ENCODE measurements at regions of chr1 and their contacts with region 1.

Region 1: GRCh38 chr1:234610348-234611152 is 572 bp upstream of the IRF2BP2 start:
- DNase-seq: peak; percentile 72 to 93
- H3K4me3 ChIP-seq: peak overlapping the region; percentile 91
- H3K27ac ChIP-seq: peak overlapping the region; percentile 100
- H3K4me1 ChIP-seq: peaks cover 38% of the 10 kb centered on the region
- H3K27me3 ChIP-seq: no peaks in the 10 kb centered on the region
- CTCF ChIP-seq: no peak

Region 2: DNA sequence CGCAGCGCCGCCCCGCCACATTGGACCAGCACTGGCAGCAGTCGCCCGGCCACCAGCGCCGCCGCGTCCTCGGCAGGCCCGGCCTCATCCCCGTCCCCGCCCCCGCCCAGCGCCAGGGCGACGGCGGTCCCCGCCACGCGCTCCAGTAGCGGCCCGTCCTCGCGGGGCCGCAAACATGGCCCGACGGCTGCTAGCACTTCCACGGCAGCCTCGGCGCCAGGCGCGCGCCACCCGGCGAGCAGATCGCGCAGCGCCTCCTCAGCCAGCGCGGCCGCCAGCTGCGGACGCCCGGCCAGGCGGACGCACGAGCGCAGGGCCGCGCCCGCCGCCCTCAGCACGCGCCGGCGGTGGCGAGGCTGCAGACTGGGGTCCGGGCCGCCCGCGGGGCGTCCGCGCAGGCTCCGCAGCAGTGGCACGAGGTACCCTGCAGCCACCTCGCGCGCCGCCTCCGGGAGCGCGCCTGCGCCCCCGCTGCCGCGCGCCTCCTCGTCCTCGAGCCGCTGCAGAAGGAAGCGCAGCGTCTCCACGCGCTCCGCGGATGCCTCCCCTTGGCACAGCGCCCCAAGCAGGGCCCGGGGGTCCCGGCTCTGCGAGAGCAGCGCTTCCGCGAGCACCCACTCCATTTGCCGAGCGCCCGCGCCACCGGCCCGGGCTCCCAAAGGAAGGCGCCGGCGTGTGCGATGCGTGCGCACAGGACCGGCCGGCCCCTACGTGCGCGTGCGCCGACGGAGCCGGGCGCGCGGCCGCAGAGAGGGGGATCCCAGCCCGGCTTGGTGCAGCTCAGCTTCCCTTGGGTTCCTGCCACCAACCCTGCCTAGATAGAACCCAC is 131.9 kb before region 1 on chr1 and contains the start of gene TARBP1:
- CTCF ChIA-PET with region 1: interaction called, 4 read pairs
- POLR2A ChIA-PET with region 1: interaction called, 12 read pairs
- intact Hi-C with region 1: no loop called
- DNase-seq: peak; percentile 44 to 73
- H3K4me3 ChIP-seq: peak within 1 kb of the TSS; percentile 74
- H3K27ac ChIP-seq: peak within 1 kb of the TSS; percentile 56
- H3K4me1 ChIP-seq: peaks cover 16% of the 10 kb centered on the region
- H3K27me3 ChIP-seq: no peaks in the 10 kb centered on the region
- CTCF ChIP-seq: no peak
- total RNA-seq, gene TARBP1: 47.3 and 61.1 TPM in 2 replicates

Region 3: GRCh38 chr1:234683861-234684632 is 73.5 kb after region 1 on chr1:
- CTCF ChIA-PET with region 1: no interaction called
- POLR2A ChIA-PET with region 1: no interaction called
- intact Hi-C with region 1: loop called (anchors 2 kb)
- DNase-seq: peak; percentile 56 to 82
- H3K4me3 ChIP-seq: 0 out of 2 replicates have a peak overlapping the region, but pooled peaks have one; percentile 3
- H3K27ac ChIP-seq: peak overlapping the region; percentile 10
- H3K4me1 ChIP-seq: peaks cover 17% of the 10 kb centered on the region
- H3K27me3 ChIP-seq: no peaks in the 10 kb centered on the region
- CTCF ChIP-seq: no peak

Region 4: GRCh38 chr1:234868296-234869147 is 258.0 kb after region 1 on chr1:
- CTCF ChIA-PET with region 1: no interaction called
- POLR2A ChIA-PET with region 1: interaction called, 22 read pairs
- intact Hi-C with region 1: no loop called
- DNase-seq: no peak
- H3K4me3 ChIP-seq: peak overlapping the region; percentile 94
- H3K27ac ChIP-seq: peak overlapping the region; percentile 98
- H3K4me1 ChIP-seq: peaks cover 68% of the 10 kb centered on the region
- H3K27me3 ChIP-seq: no peaks in the 10 kb centered on the region
- CTCF ChIP-seq: no peak

Region 5: DNA sequence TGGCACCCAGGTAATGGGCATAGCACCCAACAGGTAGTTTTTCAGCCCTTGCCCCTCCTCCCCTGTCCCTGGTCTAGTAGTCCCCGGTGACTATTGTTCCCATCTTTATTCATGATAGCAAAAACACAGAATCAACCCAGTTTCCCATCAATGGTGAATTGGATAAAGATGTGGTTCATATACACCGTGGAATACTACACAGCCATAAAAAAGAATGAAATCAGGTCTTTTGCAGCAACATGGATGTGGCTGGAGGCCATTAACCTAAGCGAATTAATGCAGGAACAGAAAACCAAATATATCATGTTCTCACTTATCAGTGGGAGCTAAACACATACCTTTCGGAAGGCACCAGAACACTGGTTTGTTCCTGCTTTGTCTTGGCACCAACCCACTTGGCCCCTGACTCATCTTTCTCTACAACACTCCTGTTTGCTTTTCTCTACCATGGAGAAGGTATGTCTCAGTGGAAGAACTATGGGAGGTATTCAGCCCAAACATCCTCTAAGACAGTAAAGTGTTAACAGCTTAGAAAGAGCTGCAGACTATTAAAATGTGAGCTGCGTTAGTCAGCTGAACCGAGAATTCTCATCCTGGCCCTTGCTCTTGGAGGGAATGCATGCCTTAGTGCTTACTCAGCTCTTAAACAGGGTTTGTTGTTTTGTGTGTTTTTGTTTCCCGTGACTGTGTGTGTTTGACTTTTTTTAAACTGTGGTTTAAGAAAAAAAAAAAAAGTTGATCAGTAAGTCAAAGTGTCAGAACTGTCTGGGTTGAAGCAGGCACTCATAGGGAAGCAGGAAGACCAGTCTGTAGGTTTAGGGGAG is 315.1 kb after region 1 on chr1:
- CTCF ChIA-PET with region 1: no interaction called
- POLR2A ChIA-PET with region 1: interaction called, 25 read pairs
- intact Hi-C with region 1: loop called (anchors 2 kb)
- DNase-seq: peak; percentile 74 to 99
- H3K4me3 ChIP-seq: no peak overlapping the region
- H3K27ac ChIP-seq: peak overlapping the region; percentile 88
- H3K4me1 ChIP-seq: peaks cover 37% of the 10 kb centered on the region
- H3K27me3 ChIP-seq: no peaks in the 10 kb centered on the region
- CTCF ChIP-seq: no peak

Region 6: GRCh38 chr1:234997201-234997895 is 386.8 kb after region 1 on chr1:
- CTCF ChIA-PET with region 1: no interaction called
- POLR2A ChIA-PET with region 1: interaction called, 3 read pairs
- intact Hi-C with region 1: loop called (anchors 1 kb)
- DNase-seq: peak; percentile 99 to 100
- H3K4me3 ChIP-seq: peak overlapping the region; percentile 45
- H3K27ac ChIP-seq: peak overlapping the region; percentile 100
- H3K4me1 ChIP-seq: peaks cover 34% of the 10 kb centered on the region
- H3K27me3 ChIP-seq: no peaks in the 10 kb centered on the region
- CTCF ChIP-seq: no peak